ENCODE measurements at regions of chr12 and their contacts with region 1.

Region 1: GRCh38 chr12:78698746-78699145 is 165.8 kb upstream of the SYT1 start:
- DNase-seq: no peak
- ATAC-seq: no peak
- H3K4me3 Mint-ChIP-seq: no peak overlapping the region
- H3K27ac Mint-ChIP-seq: no peak overlapping the region
- H3K4me1 Mint-ChIP-seq: no peaks in the 10 kb centered on the region
- H3K27me3 Mint-ChIP-seq: no peaks in the 10 kb centered on the region
- CTCF ChIP-seq: no peak

Region 2: DNA sequence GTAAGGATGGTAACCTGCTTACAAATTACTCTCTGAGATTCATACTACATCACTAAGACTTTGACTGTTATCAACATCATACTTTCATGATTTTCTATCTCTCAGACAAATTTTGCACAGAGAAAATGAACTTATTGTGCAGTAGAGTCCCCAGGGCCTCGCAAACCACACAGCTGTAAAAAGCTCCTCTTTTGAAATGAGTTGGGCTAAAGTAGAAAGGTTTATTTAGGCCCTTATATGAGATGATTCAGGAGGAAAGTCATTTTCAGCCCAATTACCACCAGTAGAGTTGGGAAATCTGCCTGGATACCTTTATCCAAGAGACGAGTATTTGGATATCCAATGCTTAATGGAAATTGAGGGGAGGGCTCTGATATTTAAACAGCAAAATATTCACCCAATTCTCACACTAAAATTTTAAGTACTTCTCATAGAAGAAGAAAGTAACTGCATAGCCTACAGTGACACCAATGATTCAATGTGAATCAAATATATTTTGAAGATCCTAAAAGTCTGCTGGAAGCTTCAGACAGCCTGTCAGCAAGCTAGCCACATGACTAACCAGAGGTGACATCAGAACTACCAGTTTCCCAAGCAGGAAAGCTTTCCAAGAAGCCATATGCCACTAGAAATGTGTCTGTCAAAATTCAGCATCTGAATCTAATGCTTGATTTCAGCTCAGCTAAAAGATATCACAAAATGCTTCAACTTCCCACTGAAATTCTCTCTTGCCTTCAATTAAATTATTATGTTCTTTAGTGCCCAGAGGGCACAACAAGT is 24.2 kb before region 1 on chr12:
- CTCF ChIA-PET with region 1: no interaction called
- POLR2A ChIA-PET with region 1: interaction called, 10 read pairs
- DNase-seq: no peak
- ATAC-seq: no peak
- H3K4me3 Mint-ChIP-seq: no peak overlapping the region
- H3K27ac Mint-ChIP-seq: no peak overlapping the region
- H3K4me1 Mint-ChIP-seq: peaks cover 4% of the 10 kb centered on the region
- H3K27me3 Mint-ChIP-seq: no peaks in the 10 kb centered on the region; the same call in none of the 2 replicates
- CTCF ChIP-seq: no peak